Vagina (tissue), 2 donors: ENCODE measurements at regions of chr17 and their contacts with region 1.

Region 1: DNA sequence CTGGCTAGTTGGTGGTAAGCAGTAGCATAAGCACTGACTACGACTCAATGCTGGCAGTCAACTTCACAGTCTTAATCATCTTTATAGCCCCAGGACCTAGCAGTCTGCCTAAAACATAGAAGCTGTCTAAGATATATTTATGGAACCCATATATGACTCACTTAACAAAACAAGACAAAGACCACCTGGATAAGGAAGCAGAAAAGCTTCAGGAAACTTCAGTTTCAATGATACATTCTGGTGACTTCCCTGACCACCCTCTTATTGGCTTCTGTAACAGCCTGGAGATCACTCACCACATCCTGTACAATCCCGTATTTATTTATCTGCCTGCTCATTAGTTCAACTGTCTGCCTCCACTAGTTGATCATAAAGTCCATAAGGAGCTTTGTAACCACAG is 95.5 kb downstream of the PMP22 start:
- DNase-seq: no peak
- H3K4me3 ChIP-seq: no peak overlapping the region
- H3K27ac ChIP-seq: no peak overlapping the region
- H3K4me1 ChIP-seq: no peaks in the 10 kb centered on the region
- H3K27me3 ChIP-seq: no peaks in the 10 kb centered on the region
- CTCF ChIP-seq: no peak
- POLR2A ChIP-seq: no peak

Region 2: GRCh38 chr17:15119968-15120367 is 49.7 kb before region 1 on chr17:
- intact Hi-C with region 1: loop called (anchors 2 kb)
- DNase-seq: no peak
- H3K4me3 ChIP-seq: no peak overlapping the region
- H3K27ac ChIP-seq: no peak overlapping the region
- H3K4me1 ChIP-seq: no peaks in the 10 kb centered on the region
- H3K27me3 ChIP-seq: no peaks in the 10 kb centered on the region
- CTCF ChIP-seq: no peak
- POLR2A ChIP-seq: no peak

Region 3: GRCh38 chr17:15273141-15273793 is 103.6 kb after region 1 on chr17:
- intact Hi-C with region 1: no loop called
- DNase-seq: no peak
- H3K4me3 ChIP-seq: no peak overlapping the region
- H3K27ac ChIP-seq: peak overlapping the region; percentile 71
- H3K4me1 ChIP-seq: peaks cover 34% of the 10 kb centered on the region
- H3K27me3 ChIP-seq: no peaks in the 10 kb centered on the region
- CTCF ChIP-seq: no peak
- POLR2A ChIP-seq: no peak